H1 (cell line): ENCODE measurements at regions of chr17 and their contacts with region 1.

Region 1: GRCh38 chr17:37239690-37240334 is 136.0 kb upstream of the C17orf78 start:
- DNase-seq: no peak
- H3K4me3 ChIP-seq: no peak overlapping the region
- H3K27ac ChIP-seq: no peak overlapping the region
- H3K4me1 ChIP-seq: no peaks in the 10 kb centered on the region
- H3K27me3 ChIP-seq: no peaks in the 10 kb centered on the region
- CTCF ChIP-seq: peak in 2 of 3 experiments; percentile 43 to 70; a peak in 2 of 4 replicates
- EP300 ChIP-seq: no peak
- POLR2A ChIP-seq: no peak
- RAD21 ChIP-seq: peak; percentile 73 to 76

Region 2: GRCh38 chr17:37197336-37197735 is 42.5 kb before region 1 on chr17:
- CTCF ChIA-PET with region 1: interaction called, 10 read pairs
- POLR2A ChIA-PET with region 1: no interaction called
- DNase-seq: no peak
- H3K4me3 ChIP-seq: no peak overlapping the region
- H3K27ac ChIP-seq: no peak overlapping the region
- H3K4me1 ChIP-seq: no peaks in the 10 kb centered on the region; a peak in 1 of 7 replicates
- H3K27me3 ChIP-seq: no peaks in the 10 kb centered on the region
- CTCF ChIP-seq: no peak
- EP300 ChIP-seq: no peak
- POLR2A ChIP-seq: no peak
- RAD21 ChIP-seq: no peak

Region 3: DNA sequence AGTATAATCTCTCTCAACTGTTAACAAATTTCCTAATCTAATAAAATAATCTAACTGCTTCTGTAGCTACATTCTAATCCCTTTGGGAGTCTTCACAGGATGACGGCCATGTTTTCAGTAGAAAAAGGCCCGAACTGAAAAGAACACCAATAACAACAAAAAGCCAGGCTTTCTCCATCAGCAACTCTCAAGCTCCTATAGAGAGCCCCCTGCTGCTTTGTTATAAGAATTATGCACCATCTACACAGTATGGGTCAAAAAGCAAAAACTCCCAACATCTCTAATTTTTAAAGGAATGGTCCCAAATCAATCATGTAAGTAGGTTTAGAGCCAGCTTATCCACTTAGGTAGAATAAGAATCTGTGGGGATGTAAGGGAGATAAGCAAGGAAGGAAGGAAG is 27.6 kb before region 1 on chr17:
- CTCF ChIA-PET with region 1: interaction called, 16 read pairs
- POLR2A ChIA-PET with region 1: no interaction called
- DNase-seq: no peak
- H3K4me3 ChIP-seq: no peak overlapping the region
- H3K27ac ChIP-seq: no peak overlapping the region
- H3K4me1 ChIP-seq: peaks cover 0 to 12% (median 2%) of the 10 kb centered on the region in 4 experiments; a peak in 3 of 7 replicates
- H3K27me3 ChIP-seq: no peaks in the 10 kb centered on the region
- CTCF ChIP-seq: no peak
- EP300 ChIP-seq: no peak
- POLR2A ChIP-seq: no peak
- RAD21 ChIP-seq: no peak

Region 4: GRCh38 chr17:37225458-37225857 is 14.4 kb before region 1 on chr17:
- CTCF ChIA-PET with region 1: interaction called, 29 read pairs
- POLR2A ChIA-PET with region 1: interaction called, 3 read pairs
- DNase-seq: no peak
- H3K4me3 ChIP-seq: peak overlapping the region in 1 of 4 experiments; percentile 5; a peak in 1 of 8 replicates
- H3K27ac ChIP-seq: peak overlapping the region; percentile 33; the same call in 1 of the 2 replicates
- H3K4me1 ChIP-seq: peaks cover 4 to 17% (median 11%) of the 10 kb centered on the region in 4 experiments; a peak in 6 of 7 replicates
- H3K27me3 ChIP-seq: no peaks in the 10 kb centered on the region
- CTCF ChIP-seq: no peak
- EP300 ChIP-seq: no peak
- POLR2A ChIP-seq: no peak
- RAD21 ChIP-seq: no peak

Region 5: DNA sequence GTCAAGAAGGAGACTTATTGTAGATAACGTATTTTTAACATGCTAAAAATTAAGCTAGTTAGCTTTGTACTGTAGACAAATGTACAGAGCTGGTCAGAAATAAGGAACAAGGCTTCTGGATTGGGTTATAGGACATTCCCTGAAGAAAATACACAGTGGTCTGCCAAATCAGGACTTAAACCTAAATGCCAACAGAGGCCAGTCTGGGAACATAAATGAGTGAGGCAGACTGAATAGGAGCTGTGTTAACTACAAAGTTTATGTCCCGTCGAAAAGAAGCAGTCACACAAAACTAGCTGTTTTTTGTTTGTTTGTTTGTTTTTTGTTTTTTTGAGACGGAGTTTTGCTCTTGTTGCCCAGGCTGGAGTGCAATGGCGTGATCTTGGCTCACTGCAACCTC is 15.6 kb after region 1 on chr17:
- CTCF ChIA-PET with region 1: interaction called, 12 read pairs
- POLR2A ChIA-PET with region 1: no interaction called
- DNase-seq: no peak
- H3K4me3 ChIP-seq: no peak overlapping the region
- H3K27ac ChIP-seq: no peak overlapping the region
- H3K4me1 ChIP-seq: no peaks in the 10 kb centered on the region
- H3K27me3 ChIP-seq: no peaks in the 10 kb centered on the region
- CTCF ChIP-seq: no peak
- EP300 ChIP-seq: no peak
- POLR2A ChIP-seq: no peak
- RAD21 ChIP-seq: no peak